A549 (cell line): ENCODE measurements at regions of chr16 and their contacts with region 1.

Region 1: DNA sequence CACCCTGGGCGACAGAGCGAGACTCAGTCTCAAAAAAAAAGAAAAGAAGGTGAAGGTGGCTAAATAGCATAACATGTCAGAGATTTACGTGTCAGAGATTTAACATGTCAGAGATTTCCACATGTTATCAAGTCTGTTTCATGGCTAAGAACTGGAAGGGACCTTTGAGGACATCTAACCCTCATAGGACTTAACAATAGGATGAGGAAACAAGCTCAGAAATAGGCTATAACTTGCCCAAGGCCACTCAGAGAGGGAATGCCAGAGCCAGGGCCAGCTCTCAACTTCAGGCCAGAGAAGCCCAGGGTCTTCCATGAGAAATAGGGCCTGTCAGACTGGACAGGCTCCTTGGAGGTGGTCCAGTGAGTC is 26.8 kb upstream of the ZNF629 start:
- DNase-seq: no peak
- ATAC-seq: no peak; a peak in 1 of 6 replicates
- H3K4me3 ChIP-seq: peak overlapping the region; percentile 52
- H3K27ac ChIP-seq: peak overlapping the region; percentile 91 to 94
- H3K4me1 ChIP-seq: peaks cover 7% of the 10 kb centered on the region
- CTCF ChIP-seq: no peak
- EP300 ChIP-seq: no peak
- POLR2A ChIP-seq: no peak
- RAD21 ChIP-seq: no peak

Region 2: DNA sequence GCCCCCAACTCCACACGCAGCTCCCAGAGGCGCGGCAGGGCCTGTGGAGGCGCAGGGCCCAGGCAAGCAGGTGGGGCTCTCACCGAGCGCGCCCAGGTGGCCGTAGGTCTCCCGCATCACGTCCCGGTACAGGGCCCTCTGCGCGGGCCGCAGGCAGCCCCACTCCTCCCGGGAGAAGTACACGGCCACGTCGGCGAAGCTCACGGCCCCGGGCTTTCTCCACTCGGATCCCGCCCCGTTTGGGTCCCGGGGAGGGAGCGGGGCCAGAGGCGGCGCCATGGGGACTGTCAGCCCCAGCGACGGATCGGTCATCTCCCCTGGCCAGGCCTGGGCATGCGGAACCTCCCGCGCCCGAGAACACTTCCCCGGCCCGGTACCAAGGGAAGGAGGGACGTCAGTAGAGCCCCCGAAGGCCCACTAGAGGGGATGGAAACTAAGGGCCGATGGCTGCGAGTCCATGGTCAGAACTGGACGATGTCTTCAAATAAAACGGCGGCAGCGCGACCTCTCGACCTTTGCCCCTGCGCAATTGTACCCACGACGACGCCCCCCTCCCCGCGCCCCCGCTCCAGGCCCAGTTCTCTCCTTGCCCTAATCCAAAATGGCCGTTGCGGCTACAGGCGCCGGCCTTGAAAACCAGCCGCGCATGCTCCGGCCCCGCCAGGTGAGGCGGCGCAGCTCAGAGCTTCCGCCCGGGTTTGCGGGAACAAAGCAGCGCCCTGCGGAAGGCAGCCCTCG is 279.3 kb before region 1 on chr16 and contains the start of gene ZNF747:
- CTCF ChIA-PET with region 1: no interaction called
- POLR2A ChIA-PET with region 1: no interaction called
- DNase-seq: peak; percentile 77 to 90
- ATAC-seq: peak; percentile 91 to 93
- H3K4me3 ChIP-seq: peak within 1 kb of the TSS; percentile 52
- H3K27ac ChIP-seq: peak within 1 kb of the TSS; percentile 89 to 93
- H3K4me1 ChIP-seq: peaks cover 13% of the 10 kb centered on the region; the same call in 2 of the 3 replicates
- CTCF ChIP-seq: no peak
- EP300 ChIP-seq: no peak
- POLR2A ChIP-seq: peak; percentile 72
- RAD21 ChIP-seq: no peak; a peak in 1 of 5 replicates
- polyA plus RNA-seq, gene ZNF747: 4.8 and 5.2 TPM in 2 replicates

Region 3: DNA sequence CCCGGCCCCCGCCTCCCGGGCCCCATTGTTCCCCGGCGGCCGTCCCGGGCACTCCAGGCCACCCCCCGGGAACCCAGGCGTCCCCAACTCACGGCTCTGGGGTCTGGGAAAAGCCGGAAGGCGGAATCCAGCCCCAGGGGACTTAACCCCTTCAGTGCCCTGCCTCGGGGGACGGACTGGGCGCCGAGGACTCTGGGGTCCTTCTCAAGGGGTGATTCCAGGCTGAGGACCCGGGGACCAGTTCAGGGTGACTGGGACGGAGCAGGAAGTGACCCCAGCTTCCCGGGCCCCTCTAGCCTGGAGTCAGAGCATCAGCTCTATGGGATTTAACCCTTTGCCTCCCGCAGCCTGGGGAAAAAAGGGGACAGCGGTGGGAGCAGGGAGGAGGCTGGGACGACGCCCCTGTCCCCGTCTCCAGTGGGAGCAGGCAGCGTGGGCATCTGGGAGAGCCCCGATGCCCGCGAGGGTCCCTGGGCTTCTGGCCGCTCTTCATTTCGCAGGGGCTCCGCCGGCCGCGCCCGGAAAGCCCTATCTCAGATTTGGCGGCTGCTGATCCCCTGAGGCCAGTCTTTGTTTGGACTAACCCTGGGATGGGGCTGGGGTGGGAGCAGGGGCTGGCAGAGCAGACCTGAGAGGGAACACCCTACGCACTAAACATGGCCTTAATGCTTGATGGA is 26.7 kb before region 1 on chr16 and contains the start of gene ZNF629:
- CTCF ChIA-PET with region 1: interaction called, 34 read pairs
- POLR2A ChIA-PET with region 1: interaction called, 3 read pairs
- DNase-seq: peak; percentile 77
- ATAC-seq: peak; percentile 82 to 89
- H3K4me3 ChIP-seq: peak within 1 kb of the TSS; percentile 98
- H3K27ac ChIP-seq: peak within 1 kb of the TSS; percentile 97 to 99
- H3K4me1 ChIP-seq: peaks cover 17% of the 10 kb centered on the region
- CTCF ChIP-seq: no peak
- EP300 ChIP-seq: no peak
- POLR2A ChIP-seq: peak; percentile 34; the same call in 1 of the 2 replicates
- RAD21 ChIP-seq: peak in 1 of 2 experiments; percentile 21; a peak in 2 of 5 replicates
- polyA plus RNA-seq, gene ZNF629: 5.9 and 7.5 TPM in 2 replicates

Region 4: GRCh38 chr16:30829130-30830071 is 15.6 kb after region 1 on chr16:
- CTCF ChIA-PET with region 1: interaction called, 13 read pairs
- POLR2A ChIA-PET with region 1: no interaction called
- DNase-seq: peak; percentile 34 to 35
- ATAC-seq: peak in 1 of 2 experiments; percentile 77; a peak in 3 of 6 replicates
- H3K4me3 ChIP-seq: no peak overlapping the region
- H3K27ac ChIP-seq: no peak overlapping the region
- H3K4me1 ChIP-seq: no peaks in the 10 kb centered on the region
- CTCF ChIP-seq: no peak
- EP300 ChIP-seq: no peak
- POLR2A ChIP-seq: no peak
- RAD21 ChIP-seq: no peak

Region 5: GRCh38 chr16:30874821-30875717 is 61.3 kb after region 1 on chr16:
- CTCF ChIA-PET with region 1: interaction called, 11 read pairs
- POLR2A ChIA-PET with region 1: interaction called, 10 read pairs
- DNase-seq: peak; percentile 82 to 93
- ATAC-seq: peak; percentile 95 to 98
- H3K4me3 ChIP-seq: peak overlapping the region; percentile 71
- H3K27ac ChIP-seq: peak overlapping the region; percentile 90 to 96
- H3K4me1 ChIP-seq: peaks cover 13% of the 10 kb centered on the region; the same call in 2 of the 3 replicates
- CTCF ChIP-seq: no peak
- EP300 ChIP-seq: no peak
- POLR2A ChIP-seq: peak; percentile 99
- RAD21 ChIP-seq: peak in 1 of 2 experiments; percentile 29; a peak in 1 of 5 replicates